ENCODE measurements at regions of chr6 and their contacts with region 1.

Region 1: DNA sequence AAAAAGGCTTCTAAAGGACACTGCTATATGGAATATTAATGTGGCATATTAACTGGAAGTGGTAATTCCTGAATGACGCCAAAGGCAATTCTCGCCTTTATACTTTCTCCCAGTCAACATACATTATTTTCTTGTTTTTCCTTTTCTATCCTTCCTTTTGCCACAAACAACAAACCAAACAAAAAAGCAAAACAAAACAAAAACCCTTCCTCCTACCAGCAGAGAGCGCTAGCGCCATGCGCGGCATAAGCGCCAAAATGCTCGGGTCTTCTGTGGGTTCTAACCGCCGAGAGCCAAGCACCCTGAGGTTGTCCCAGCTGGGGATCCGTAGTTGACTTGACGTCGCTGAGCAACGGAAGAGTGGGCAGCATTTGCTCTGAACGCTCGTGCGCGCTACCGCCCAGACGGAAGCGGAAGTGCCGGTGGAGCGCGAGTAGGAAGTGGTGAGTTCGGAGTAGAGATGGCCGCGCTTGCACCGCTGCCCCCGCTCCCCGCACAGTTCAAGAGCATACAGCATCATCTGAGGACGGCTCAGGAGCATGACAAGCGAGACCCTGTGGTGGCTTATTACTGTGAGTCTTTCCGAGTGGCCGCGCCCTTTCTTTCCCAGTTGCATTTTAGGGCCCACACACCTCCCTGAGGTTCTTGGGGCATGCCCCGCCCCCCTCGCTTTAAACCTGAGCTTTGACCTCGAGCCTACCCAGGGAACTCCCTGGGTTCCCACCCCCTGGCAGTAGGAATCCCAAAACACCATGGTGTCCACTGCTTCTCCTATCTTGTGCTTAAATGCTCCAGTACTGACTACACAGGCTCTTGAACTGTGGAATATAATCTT is at the starts of genes NMBR and VTA1:
- DNase-seq: peak; percentile 98
- H3K4me3 Mint-ChIP-seq: peak within 1 kb of the TSS; percentile 93
- H3K27ac Mint-ChIP-seq: peak within 1 kb of the TSS; percentile 91
- H3K4me1 Mint-ChIP-seq: peaks cover 53% of the 10 kb centered on the region
- H3K27me3 Mint-ChIP-seq: no peaks in the 10 kb centered on the region
- total RNA-seq, gene NMBR: not detected
- total RNA-seq, gene VTA1: 54.7 to 57.3 TPM

Region 2: DNA sequence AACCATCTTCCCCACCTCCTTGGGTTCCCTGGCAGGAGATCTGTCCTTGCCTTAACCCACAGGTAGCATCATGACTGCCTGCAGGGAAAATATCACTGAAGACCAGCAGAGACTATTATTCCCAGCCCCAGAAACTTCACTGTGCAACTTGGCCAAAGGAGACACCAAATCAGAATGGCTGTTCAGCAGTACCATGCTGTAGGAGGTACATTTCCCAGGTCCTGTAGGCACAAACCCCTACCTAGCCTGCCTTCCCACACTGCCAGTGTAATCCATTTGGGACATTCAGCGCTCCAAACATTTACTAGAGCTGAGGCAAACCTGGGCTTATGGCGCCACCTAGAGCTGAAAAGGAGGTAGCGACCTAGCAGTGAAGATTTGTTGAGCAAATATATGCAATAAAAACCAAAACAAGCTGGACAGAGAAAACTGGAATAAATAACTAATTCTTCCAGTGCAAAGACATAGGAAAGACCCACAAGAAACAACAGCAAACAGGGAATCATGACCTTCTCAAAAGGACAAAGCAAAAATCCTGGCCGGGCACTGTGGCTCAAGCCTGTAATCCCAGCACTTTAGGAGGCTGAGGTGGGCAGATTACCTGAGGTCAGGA is 60.3 kb after region 1 on chr6:
- CTCF ChIA-PET with region 1: interaction called, 10 read pairs
- intact Hi-C with region 1: loop called (anchors 1 kb)
- DNase-seq: peak; percentile 62
- H3K4me3 Mint-ChIP-seq: no peak overlapping the region
- H3K27ac Mint-ChIP-seq: no peak overlapping the region
- H3K4me1 Mint-ChIP-seq: peaks cover 2% of the 10 kb centered on the region
- H3K27me3 Mint-ChIP-seq: no peaks in the 10 kb centered on the region

Region 3: GRCh38 chr6:142387997-142388815 is 241.2 kb after region 1 on chr6:
- CTCF ChIA-PET with region 1: no interaction called
- intact Hi-C with region 1: loop called (anchors 1 kb)
- DNase-seq: no peak
- H3K4me3 Mint-ChIP-seq: no peak overlapping the region
- H3K27ac Mint-ChIP-seq: no peak overlapping the region
- H3K4me1 Mint-ChIP-seq: no peaks in the 10 kb centered on the region
- H3K27me3 Mint-ChIP-seq: no peaks in the 10 kb centered on the region

Region 4: DNA sequence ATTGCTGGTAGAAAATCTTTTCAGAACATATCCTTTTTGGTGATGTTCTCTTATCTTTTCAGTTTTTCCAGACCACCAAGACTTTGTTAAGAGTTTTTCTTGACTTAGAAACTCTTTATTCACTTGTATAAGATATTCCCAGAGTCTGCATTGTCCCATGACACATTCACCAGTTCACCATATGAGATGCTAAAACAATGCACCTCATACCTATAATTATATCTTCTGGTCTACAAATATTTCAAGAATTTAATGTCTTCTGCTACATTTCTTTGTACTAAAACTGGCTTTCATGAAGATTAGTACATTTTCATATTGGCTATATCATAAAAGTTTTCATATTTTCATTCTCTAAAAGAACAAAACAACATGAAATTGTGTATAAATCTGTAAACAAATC is 266.1 kb after region 1 on chr6:
- CTCF ChIA-PET with region 1: no interaction called
- intact Hi-C with region 1: loop called (anchors 1 kb)
- DNase-seq: no peak
- H3K4me3 Mint-ChIP-seq: no peak overlapping the region
- H3K27ac Mint-ChIP-seq: no peak overlapping the region
- H3K4me1 Mint-ChIP-seq: peaks cover 35% of the 10 kb centered on the region
- H3K27me3 Mint-ChIP-seq: no peaks in the 10 kb centered on the region

Region 5: GRCh38 chr6:142537612-142538478 is 390.8 kb after region 1 on chr6:
- CTCF ChIA-PET with region 1: no interaction called
- intact Hi-C with region 1: loop called (anchors 1 kb)
- DNase-seq: peak; percentile 55
- H3K4me3 Mint-ChIP-seq: no peak overlapping the region
- H3K27ac Mint-ChIP-seq: no peak overlapping the region
- H3K4me1 Mint-ChIP-seq: peaks cover 5% of the 10 kb centered on the region
- H3K27me3 Mint-ChIP-seq: no peaks in the 10 kb centered on the region

Region 6: DNA sequence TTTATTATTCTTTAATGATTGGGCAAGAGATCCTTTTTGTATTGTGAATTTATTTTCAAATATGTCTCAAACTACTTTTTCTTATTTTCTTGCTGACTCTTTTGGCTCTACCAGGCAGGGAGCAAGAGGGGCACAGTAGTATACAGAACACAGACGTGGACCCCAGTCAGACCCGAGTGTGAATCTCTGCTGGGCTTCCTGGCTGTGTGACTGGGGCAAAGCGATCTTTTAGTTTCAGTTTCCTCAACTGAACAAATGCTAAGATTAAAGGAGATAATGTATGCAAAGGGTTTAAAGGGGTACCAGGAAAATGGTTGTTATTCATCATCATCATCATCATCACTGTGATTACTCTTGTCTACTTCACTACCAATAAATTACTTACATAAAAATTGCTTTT is 480.4 kb after region 1 on chr6:
- CTCF ChIA-PET with region 1: no interaction called
- intact Hi-C with region 1: no loop called
- DNase-seq: no peak
- H3K4me3 Mint-ChIP-seq: no peak overlapping the region
- H3K27ac Mint-ChIP-seq: no peak overlapping the region
- H3K4me1 Mint-ChIP-seq: peaks cover 9% of the 10 kb centered on the region
- H3K27me3 Mint-ChIP-seq: no peaks in the 10 kb centered on the region

Region 7: GRCh38 chr6:142850679-142851423 is 703.8 kb after region 1 on chr6:
- CTCF ChIA-PET with region 1: no interaction called
- intact Hi-C with region 1: loop called (anchors 10 kb)
- DNase-seq: peak; percentile 62
- H3K4me3 Mint-ChIP-seq: peak overlapping the region; percentile 39
- H3K27ac Mint-ChIP-seq: peak overlapping the region; percentile 91
- H3K4me1 Mint-ChIP-seq: peaks cover 97% of the 10 kb centered on the region
- H3K27me3 Mint-ChIP-seq: no peaks in the 10 kb centered on the region

Region 8: DNA sequence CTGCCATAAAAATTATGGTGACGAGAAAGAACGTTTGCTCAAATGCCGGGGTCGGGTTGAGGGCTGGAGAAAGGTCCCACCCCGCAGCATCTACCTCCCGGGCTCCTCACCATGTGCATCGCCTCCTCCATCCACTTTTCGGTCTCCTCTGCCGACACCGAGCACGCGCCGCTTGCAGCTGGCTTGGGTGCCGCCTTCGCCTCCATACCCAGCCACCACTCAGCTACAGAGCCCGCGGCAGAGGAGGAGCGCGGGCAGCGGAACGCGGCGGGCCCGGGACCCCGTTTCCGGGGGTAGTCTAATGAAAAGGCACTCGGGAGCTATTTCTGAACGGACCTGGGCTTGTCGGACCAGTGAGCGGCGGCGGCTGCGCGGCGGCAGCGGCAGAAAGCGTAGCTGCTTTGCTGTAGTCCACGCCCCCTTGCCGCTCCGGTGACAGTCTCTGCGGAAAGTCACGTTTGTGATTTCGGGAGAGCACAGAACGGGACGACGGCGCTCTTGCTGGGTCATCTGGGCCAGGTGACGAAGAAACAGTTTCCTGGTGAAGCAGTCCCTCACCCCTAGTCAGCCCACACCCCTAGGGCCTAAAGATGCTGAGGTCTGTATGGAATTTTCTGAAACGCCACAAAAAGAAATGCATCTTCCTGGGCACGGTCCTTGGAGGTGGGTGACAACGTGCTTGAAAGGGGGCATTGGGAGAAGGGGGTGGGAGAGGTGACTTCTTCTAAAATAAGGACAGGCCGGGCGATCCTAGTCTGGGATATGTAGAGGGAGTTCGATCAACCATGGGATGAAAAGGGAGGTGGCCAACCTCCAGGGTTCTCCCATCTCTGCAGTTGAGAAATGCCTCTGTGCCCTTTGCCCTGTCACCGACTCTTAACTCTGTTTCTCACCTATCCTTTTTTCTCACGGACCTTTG is 1303.7 kb after region 1 on chr6 and contains the starts of genes ADAT2 and PEX3:
- CTCF ChIA-PET with region 1: no interaction called
- intact Hi-C with region 1: loop called (anchors 1 kb)
- DNase-seq: peak; percentile 96
- H3K4me3 Mint-ChIP-seq: peak within 1 kb of the TSS; percentile 100
- H3K27ac Mint-ChIP-seq: peak within 1 kb of the TSS; percentile 97
- H3K4me1 Mint-ChIP-seq: peaks cover 50% of the 10 kb centered on the region
- H3K27me3 Mint-ChIP-seq: no peaks in the 10 kb centered on the region
- total RNA-seq, gene ADAT2: 36.8 to 39.5 TPM
- total RNA-seq, gene PEX3: 10.8 to 11.9 TPM